Activated T-helper 1 cell treated with anti-CD3 and anti-CD28 coated beads, Interleukin-12 subunit alpha, Interleukin-12 subunit beta, Interleukin-2, Interleukin-4 antibody, amounts not matched to agents 30 ng/mL and 10 ng/mL and 1 ng/mL, durations not matched to agents 14 hours and 24 hours and 36 hours (primary cell): ENCODE measurements at regions of chr11 and their contacts with region 1.

Region 1: DNA sequence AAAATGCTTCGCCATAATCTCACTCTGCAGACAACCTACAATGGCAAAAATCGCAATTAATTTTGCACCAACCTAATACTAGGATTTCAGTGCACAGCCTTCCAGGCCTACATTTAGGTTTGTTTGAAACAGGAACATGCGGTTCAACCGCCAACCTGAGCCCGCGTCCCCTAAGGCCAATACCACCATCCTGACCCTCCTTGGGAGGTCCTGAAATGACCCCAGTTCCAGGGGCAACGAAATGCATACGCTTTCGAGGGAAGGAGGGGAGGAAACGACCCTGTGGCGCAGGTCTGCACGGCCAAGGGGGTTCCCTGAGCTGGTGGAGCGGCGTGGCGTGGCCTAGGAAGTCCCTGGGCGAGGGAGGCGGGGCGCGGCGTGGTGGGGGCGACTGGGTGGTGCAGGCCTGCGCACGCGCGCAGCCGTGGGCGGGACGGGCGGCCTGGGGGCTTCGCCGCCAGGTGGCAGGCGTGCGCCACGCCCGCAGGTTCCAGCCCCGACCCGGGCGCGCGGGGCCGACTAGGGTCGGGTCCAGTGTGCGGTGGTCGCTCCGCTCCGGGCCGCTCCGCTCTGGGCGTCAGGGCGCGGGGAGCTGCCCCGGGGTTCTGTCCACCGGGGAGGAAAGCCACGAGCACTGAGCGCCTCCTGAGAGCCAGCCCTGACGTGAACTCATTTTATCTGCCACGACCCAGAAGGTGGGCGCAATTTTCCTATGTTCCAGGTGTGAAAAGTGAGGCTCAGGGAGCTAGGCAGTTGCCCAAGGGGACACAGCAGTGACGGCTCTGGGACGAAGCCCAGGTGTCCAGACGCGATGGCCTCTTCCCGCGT is 94.1 kb downstream of the SWAP70 start:
- DNase-seq: peak; percentile 87
- H3K4me3 Mint-ChIP-seq: peak overlapping the region; percentile 80
- H3K27ac Mint-ChIP-seq: peak overlapping the region; percentile 76
- H3K4me1 Mint-ChIP-seq: peaks cover 57% of the 10 kb centered on the region
- H3K27me3 Mint-ChIP-seq: peaks cover 2% of the 10 kb centered on the region

Region 2: DNA sequence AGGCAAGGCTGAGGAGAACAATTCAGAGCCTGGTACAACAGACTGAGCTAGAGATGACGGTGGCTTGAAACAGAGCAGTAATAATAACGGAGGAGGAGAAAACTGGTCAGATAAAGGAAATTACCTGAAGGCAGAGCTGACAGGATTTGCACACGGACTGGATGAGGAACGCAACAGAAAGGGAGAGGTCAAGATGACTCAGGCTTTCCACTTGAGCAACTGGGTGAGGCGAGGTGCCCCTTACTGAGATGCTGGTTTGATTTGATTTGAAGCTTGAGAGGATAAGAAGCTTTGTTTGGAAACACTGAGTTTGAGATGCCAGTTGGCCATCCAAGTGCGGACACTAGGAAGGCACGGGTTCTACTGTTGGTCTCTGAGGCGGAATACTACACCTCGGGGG is 718.8 kb before region 1 on chr11:
- intact Hi-C with region 1: no loop called
- DNase-seq: no peak
- H3K4me3 Mint-ChIP-seq: no peak overlapping the region
- H3K27ac Mint-ChIP-seq: no peak overlapping the region
- H3K4me1 Mint-ChIP-seq: no peaks in the 10 kb centered on the region
- H3K27me3 Mint-ChIP-seq: peaks cover 16% of the 10 kb centered on the region

Region 3: GRCh38 chr11:9840460-9841004 is 82.5 kb after region 1 on chr11:
- intact Hi-C with region 1: loop called (anchors 1 kb)
- DNase-seq: peak; percentile 5
- H3K4me3 Mint-ChIP-seq: peak overlapping the region; percentile 2
- H3K27ac Mint-ChIP-seq: peak overlapping the region; percentile 19
- H3K4me1 Mint-ChIP-seq: peaks cover 46% of the 10 kb centered on the region
- H3K27me3 Mint-ChIP-seq: no peaks in the 10 kb centered on the region

Region 4: GRCh38 chr11:9972989-9973388 is 215.0 kb after region 1 on chr11:
- intact Hi-C with region 1: loop called (anchors 1 kb)
- DNase-seq: peak; percentile 9
- H3K4me3 Mint-ChIP-seq: no peak overlapping the region
- H3K27ac Mint-ChIP-seq: no peak overlapping the region
- H3K4me1 Mint-ChIP-seq: no peaks in the 10 kb centered on the region
- H3K27me3 Mint-ChIP-seq: peaks cover 5% of the 10 kb centered on the region

Region 5: GRCh38 chr11:10208131-10208575 is 450.1 kb after region 1 on chr11:
- intact Hi-C with region 1: loop called (anchors 2 kb)
- DNase-seq: no peak
- H3K4me3 Mint-ChIP-seq: no peak overlapping the region
- H3K27ac Mint-ChIP-seq: no peak overlapping the region
- H3K4me1 Mint-ChIP-seq: no peaks in the 10 kb centered on the region
- H3K27me3 Mint-ChIP-seq: peaks cover 11% of the 10 kb centered on the region

Region 6: GRCh38 chr11:10366568-10367370 is 608.7 kb after region 1 on chr11:
- intact Hi-C with region 1: loop called (anchors 1 kb)
- DNase-seq: peak; percentile 51
- H3K4me3 Mint-ChIP-seq: no peak overlapping the region
- H3K27ac Mint-ChIP-seq: no peak overlapping the region
- H3K4me1 Mint-ChIP-seq: peaks cover 5% of the 10 kb centered on the region
- H3K27me3 Mint-ChIP-seq: peaks cover 5% of the 10 kb centered on the region